CD8-positive, alpha-beta T cell (primary cell): ENCODE measurements at regions of chr18 and their contacts with region 1.

Region 1: DNA sequence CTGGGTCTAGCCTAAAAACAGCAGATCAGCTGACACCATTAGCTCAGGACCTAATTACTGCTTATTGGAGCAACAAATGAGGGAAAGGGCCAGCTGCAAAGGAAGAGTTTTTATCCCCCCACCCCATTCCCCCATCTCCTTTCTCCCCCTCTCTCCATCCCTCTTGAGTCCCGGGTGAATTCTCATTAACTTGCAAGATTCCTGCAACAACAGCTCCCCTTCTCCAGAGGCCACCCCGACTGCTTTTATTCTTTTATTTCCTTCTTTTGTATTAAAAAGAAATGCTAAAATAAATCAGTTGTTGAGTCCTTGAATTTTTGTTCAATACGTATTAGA is 473 bp upstream of the NOL4 start:
- DNase-seq: no peak
- ATAC-seq: no peak
- H3K4me3 ChIP-seq: no peak overlapping the region
- H3K4me3 Mint-ChIP-seq: no peak overlapping the region
- H3K27ac ChIP-seq: no peak overlapping the region
- H3K27ac Mint-ChIP-seq: no peak overlapping the region
- H3K4me1 ChIP-seq: no peaks in the 10 kb centered on the region
- H3K4me1 Mint-ChIP-seq: no peaks in the 10 kb centered on the region
- H3K27me3 ChIP-seq: peaks cover 2 to 15% of the 10 kb centered on the region in 2 experiments
- H3K27me3 Mint-ChIP-seq: peaks cover 23% of the 10 kb centered on the region
- CTCF ChIP-seq: no peak

Region 2: GRCh38 chr18:34281722-34282121 is 56.5 kb after region 1 on chr18:
- CTCF ChIA-PET with region 1: no interaction called
- POLR2A ChIA-PET with region 1: no interaction called
- intact Hi-C with region 1: loop called in 1 of 2 experiments (anchors 5 kb)
- DNase-seq: no peak
- ATAC-seq: no peak
- H3K4me3 ChIP-seq: no peak overlapping the region
- H3K4me3 Mint-ChIP-seq: no peak overlapping the region
- H3K27ac ChIP-seq: no peak overlapping the region
- H3K27ac Mint-ChIP-seq: no peak overlapping the region
- H3K4me1 ChIP-seq: no peaks in the 10 kb centered on the region
- H3K4me1 Mint-ChIP-seq: no peaks in the 10 kb centered on the region
- H3K27me3 ChIP-seq: no peaks in the 10 kb centered on the region
- H3K27me3 Mint-ChIP-seq: no peaks in the 10 kb centered on the region
- CTCF ChIP-seq: no peak